A549 (cell line): ENCODE measurements at regions of chr3 and their contacts with region 1.

Region 1: DNA sequence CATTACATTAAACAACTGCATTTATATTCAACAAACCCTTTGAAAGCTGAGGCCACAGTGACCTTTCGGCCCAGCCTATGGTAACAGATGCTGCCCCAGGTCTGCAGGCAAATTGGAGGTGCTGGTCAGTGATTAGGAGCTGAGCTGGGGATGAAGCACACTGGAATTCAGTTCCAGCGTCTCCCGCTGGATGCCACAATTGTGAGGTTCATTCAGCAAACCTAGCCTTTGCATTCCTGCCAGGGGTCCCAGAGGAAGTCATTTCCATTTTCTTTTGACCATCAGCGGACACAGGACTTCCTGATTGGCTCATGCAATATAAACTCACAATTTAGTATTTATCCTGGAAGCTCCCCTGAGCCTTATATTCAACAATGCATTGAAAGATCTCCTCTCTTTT is 89.5 kb downstream of the IL20RB start:
- DNase-seq: no peak
- ATAC-seq: no peak
- H3K4me3 ChIP-seq: no peak overlapping the region
- H3K27ac ChIP-seq: no peak overlapping the region
- H3K4me1 ChIP-seq: no peaks in the 10 kb centered on the region
- CTCF ChIP-seq: no peak
- EP300 ChIP-seq: no peak
- POLR2A ChIP-seq: no peak
- RAD21 ChIP-seq: no peak

Region 2: GRCh38 chr3:137032465-137033120 is 14.6 kb before region 1 on chr3:
- CTCF ChIA-PET with region 1: interaction called, 12 read pairs
- POLR2A ChIA-PET with region 1: no interaction called
- DNase-seq: peak; percentile 68 to 76
- ATAC-seq: peak; percentile 91 to 95
- H3K4me3 ChIP-seq: peak overlapping the region; percentile 3; the same call in 2 of the 3 replicates
- H3K27ac ChIP-seq: no peak overlapping the region
- H3K4me1 ChIP-seq: no peaks in the 10 kb centered on the region
- CTCF ChIP-seq: peak; percentile 68
- EP300 ChIP-seq: no peak
- POLR2A ChIP-seq: no peak
- RAD21 ChIP-seq: peak; percentile 68 to 71

Region 3: GRCh38 chr3:137148917-137149316 is 101.7 kb after region 1 on chr3:
- CTCF ChIA-PET with region 1: no interaction called
- POLR2A ChIA-PET with region 1: no interaction called
- DNase-seq: no peak
- ATAC-seq: no peak
- H3K4me3 ChIP-seq: no peak overlapping the region
- H3K27ac ChIP-seq: no peak overlapping the region
- H3K4me1 ChIP-seq: no peaks in the 10 kb centered on the region
- CTCF ChIP-seq: no peak
- EP300 ChIP-seq: no peak
- POLR2A ChIP-seq: no peak
- RAD21 ChIP-seq: no peak

Region 4: GRCh38 chr3:137554242-137554641 is 507.0 kb after region 1 on chr3:
- CTCF ChIA-PET with region 1: no interaction called
- POLR2A ChIA-PET with region 1: no interaction called
- DNase-seq: no peak
- ATAC-seq: no peak
- H3K4me3 ChIP-seq: no peak overlapping the region
- H3K27ac ChIP-seq: no peak overlapping the region
- H3K4me1 ChIP-seq: no peaks in the 10 kb centered on the region
- CTCF ChIP-seq: no peak
- EP300 ChIP-seq: no peak
- POLR2A ChIP-seq: no peak
- RAD21 ChIP-seq: no peak